Activated CD8-positive, alpha-beta T cell treated with anti-CD3 and anti-CD28 coated beads, Interleukin-2, amount 10 ng/mL, durations not matched to agents 7 days and 5 days (primary cell): ENCODE measurements at regions of chr12 and their contacts with region 1.

Region 1: DNA sequence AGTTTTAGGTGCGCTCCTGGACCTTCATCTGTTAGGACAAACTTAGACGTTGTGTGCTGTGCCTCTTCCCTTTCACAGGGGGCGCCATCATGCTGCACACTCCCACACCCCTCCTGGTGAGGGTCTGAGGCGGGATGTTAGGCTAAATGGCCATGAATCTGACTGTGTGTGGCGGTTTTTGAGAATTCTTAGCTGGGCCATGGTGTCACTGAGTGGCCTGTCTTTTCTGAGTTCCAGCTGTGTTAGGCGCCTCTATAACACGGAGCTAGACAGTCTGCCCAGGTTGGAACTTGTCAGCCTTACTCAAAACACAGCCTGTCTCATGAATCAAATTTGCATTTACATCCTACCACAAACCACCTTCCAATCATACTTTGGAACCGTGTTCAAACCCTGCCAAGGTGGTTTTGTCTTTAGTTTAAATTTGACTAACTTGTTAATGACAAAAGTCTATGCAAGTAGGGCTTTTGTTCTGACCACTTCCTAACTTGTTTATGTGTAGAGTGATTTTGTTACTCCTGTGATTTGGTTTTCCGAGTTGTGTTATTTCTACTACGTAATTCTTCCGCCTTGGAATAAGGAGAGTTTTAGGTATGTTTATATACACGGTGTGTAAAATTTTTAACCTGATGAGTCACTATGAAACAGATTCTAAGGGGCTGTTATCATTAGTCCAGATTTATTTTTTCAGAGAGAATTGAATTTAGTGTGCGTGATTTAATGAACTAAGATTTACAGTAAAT is 19.6 kb downstream of the ACVR1B start:
- DNase-seq: peak; percentile 71
- ATAC-seq: peak; percentile 83
- H3K4me3 Mint-ChIP-seq: peak overlapping the region; percentile 62
- H3K27ac Mint-ChIP-seq: peak overlapping the region; percentile 80
- H3K4me1 Mint-ChIP-seq: peaks cover 62% of the 10 kb centered on the region
- H3K27me3 Mint-ChIP-seq: peaks cover 8% of the 10 kb centered on the region

Region 2: DNA sequence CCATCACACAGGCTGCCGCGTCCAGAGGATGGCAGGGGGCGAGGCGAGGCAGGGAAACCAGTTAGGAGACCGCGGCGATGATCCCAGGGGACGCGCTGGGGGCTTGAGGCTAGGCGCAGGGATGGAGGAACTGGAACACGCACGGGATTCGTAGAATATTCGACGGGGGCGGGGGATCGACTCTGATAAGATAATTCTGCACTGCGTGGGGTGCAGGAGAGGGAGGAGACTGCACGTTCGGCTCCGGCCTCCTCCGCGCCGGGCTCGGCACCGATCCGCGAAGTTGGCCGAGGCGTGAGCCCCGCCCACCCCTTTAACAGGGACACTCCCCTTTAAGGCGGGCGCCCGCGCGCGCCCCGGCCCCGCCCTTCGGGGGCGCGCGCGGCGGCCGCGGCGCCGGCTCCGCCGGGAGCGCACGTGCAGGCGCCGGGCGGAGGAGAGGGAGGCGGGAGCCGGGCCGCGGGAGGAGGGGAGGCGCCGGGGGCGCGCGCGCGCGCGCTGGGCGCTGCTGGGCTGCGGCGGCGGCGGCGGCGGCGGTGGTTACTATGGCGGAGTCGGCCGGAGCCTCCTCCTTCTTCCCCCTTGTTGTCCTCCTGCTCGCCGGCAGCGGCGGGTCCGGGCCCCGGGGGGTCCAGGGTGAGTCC is 19.8 kb before region 1 on chr12 and contains the start of gene ACVR1B:
- CTCF ChIA-PET with region 1: interaction called, 23 read pairs
- POLR2A ChIA-PET with region 1: no interaction called
- DNase-seq: peak; percentile 90
- ATAC-seq: peak; percentile 99
- H3K4me3 Mint-ChIP-seq: peak within 1 kb of the TSS; percentile 86
- H3K27ac Mint-ChIP-seq: peak within 1 kb of the TSS; percentile 62
- H3K4me1 Mint-ChIP-seq: peaks cover 27% of the 10 kb centered on the region
- H3K27me3 Mint-ChIP-seq: peaks cover 28% of the 10 kb centered on the region
- total RNA-seq, gene ACVR1B: 7.8 to 8.8 TPM

Region 3: DNA sequence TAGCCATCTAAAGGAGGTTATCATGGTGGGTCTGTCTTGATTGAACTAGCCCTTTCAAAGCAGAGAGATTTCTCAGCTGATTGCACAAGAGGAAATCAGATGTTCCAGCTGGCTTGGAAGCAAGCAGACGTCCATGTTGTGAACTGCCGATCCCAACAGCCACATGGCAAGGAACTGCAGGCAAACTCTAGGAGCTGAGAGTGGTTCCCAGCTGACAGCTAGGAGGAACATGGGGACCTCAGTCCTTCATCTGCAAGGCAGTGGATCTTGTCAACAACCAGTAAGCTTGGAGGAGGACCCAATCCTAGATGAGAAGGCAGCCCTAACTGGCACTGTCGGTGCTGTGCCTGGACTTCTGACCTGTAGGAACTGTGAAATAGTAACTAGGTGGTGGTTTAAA is 11.9 kb before region 1 on chr12:
- CTCF ChIA-PET with region 1: interaction called, 62 read pairs
- POLR2A ChIA-PET with region 1: interaction called, 3 read pairs
- DNase-seq: no peak
- ATAC-seq: no peak
- H3K4me3 Mint-ChIP-seq: no peak overlapping the region
- H3K27ac Mint-ChIP-seq: no peak overlapping the region
- H3K4me1 Mint-ChIP-seq: peaks cover 11% of the 10 kb centered on the region
- H3K27me3 Mint-ChIP-seq: peaks cover 1% of the 10 kb centered on the region

Region 4: GRCh38 chr12:51994538-51994820 is 23.4 kb after region 1 on chr12:
- CTCF ChIA-PET with region 1: interaction called, 11 read pairs
- POLR2A ChIA-PET with region 1: no interaction called
- DNase-seq: no peak
- ATAC-seq: no peak
- H3K4me3 Mint-ChIP-seq: no peak overlapping the region
- H3K27ac Mint-ChIP-seq: no peak overlapping the region
- H3K4me1 Mint-ChIP-seq: peaks cover 7% of the 10 kb centered on the region
- H3K27me3 Mint-ChIP-seq: no peaks in the 10 kb centered on the region